ENCODE measurements at regions of chr3 and their contacts with region 1.

Region 1: GRCh38 chr3:24185738-24186384 is 240.8 kb downstream of the NR1D2 start:
- DNase-seq: peak; percentile 36 to 74
- ATAC-seq: peak; percentile 85 to 92
- H3K4me3 ChIP-seq: no peak overlapping the region
- H3K27ac ChIP-seq: peak overlapping the region in 1 of 2 experiments; percentile 46; a peak in 2 of 6 replicates
- H3K4me1 ChIP-seq: no peaks in the 10 kb centered on the region
- CTCF ChIP-seq: peak; percentile 67
- EP300 ChIP-seq: no peak
- POLR2A ChIP-seq: no peak
- RAD21 ChIP-seq: peak; percentile 70 to 74

Region 2: DNA sequence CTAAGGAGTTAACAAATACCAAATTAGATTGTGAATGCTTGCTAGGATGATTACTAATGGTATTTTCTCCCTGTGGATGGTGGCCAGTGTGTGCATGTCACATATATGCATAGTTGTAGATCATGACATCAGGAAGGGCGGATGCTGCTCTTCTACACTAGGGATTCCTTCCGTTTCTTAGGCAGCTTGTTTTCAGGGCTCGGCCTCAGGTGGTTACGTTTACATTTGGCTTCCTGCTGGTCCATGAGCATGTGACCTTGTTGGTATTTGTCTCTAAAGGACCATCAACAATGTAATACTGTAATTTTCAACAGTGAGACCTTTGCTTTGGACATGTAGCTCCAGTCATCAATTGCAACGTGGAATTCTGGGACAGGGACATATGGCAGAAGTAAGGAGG is 19.3 kb before region 1 on chr3:
- CTCF ChIA-PET with region 1: interaction called, 13 read pairs
- POLR2A ChIA-PET with region 1: no interaction called
- DNase-seq: no peak
- ATAC-seq: no peak
- H3K4me3 ChIP-seq: no peak overlapping the region
- H3K27ac ChIP-seq: no peak overlapping the region
- H3K4me1 ChIP-seq: no peaks in the 10 kb centered on the region
- CTCF ChIP-seq: no peak
- EP300 ChIP-seq: no peak
- POLR2A ChIP-seq: no peak
- RAD21 ChIP-seq: no peak

Region 3: DNA sequence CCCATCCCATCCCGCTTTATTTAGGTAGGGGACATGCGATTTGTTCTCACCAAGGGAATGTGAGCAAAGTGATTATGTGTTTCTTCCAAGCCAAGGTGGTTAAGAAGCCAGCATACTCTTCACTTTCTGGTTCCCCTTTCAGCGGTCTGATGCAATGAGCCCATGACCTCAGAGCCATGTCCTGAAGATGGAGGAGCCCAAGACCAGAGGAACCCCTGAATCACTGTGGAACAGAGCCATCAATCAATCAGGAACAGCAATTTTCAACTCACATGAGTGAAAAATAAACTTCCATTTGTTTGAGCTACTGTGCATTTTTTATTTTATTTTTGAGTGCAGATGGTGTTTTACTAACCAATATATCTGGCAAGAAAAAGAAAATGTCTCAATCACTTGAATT is 298.0 kb after region 1 on chr3:
- CTCF ChIA-PET with region 1: no interaction called
- POLR2A ChIA-PET with region 1: no interaction called
- DNase-seq: no peak
- ATAC-seq: no peak
- H3K4me3 ChIP-seq: no peak overlapping the region
- H3K27ac ChIP-seq: no peak overlapping the region
- H3K4me1 ChIP-seq: 0 out of 3 replicates have a peak, but pooled peaks cover 8% of the 10 kb centered on the region
- CTCF ChIP-seq: no peak
- EP300 ChIP-seq: no peak
- POLR2A ChIP-seq: no peak
- RAD21 ChIP-seq: no peak